Upper lobe of right lung (tissue), 1 donor: ENCODE measurements at regions of chr17 and their contacts with region 1.

Region 1: DNA sequence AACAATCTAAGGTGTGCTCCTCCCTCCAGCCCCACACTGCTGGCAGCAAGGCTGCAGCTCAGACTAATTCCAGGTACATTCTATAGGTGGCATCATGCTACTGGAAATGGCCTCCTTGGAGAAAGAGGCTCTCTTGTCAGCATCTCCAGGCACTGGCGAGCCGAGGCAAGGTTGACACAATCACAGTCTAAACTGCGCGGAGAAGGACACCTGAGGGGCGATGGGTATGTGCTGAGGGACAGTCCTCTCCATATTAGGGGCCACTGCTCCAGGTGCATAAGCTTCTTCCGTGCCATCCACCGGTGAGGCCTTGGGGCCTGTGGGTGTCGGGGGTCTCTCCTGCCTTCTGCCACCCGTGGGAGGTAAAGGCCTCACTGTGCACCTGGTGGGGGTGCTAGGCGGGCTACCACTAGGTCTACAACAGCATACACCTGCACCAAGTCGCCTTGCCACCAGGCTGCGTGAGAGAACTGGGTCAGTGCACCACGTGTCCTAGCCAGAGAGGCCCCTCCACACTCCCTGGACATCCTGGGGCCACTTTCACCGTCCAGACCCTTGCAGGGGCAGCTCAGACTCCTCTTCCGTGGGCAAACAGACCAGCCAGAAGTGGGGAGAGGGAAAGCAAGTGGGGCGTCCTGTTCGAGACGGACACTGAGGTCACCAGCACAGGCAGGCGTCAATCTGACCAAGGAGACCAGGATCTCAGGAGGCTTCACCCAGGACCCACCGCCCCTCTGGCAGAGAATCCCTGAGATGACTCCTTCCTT is 12.1 kb upstream of the CBX8 start:
- DNase-seq: no peak
- ATAC-seq: peak; percentile 75
- H3K4me3 ChIP-seq: no peak overlapping the region
- H3K27ac ChIP-seq: no peak overlapping the region
- H3K4me1 ChIP-seq: peaks cover 31% of the 10 kb centered on the region
- H3K27me3 ChIP-seq: peaks cover 86% of the 10 kb centered on the region
- CTCF ChIP-seq: peak; percentile 32

Region 2: GRCh38 chr17:79760197-79760906 is 48.6 kb before region 1 on chr17:
- intact Hi-C with region 1: no loop called
- DNase-seq: peak; percentile 40
- ATAC-seq: no peak
- H3K4me3 ChIP-seq: no peak overlapping the region
- H3K27ac ChIP-seq: no peak overlapping the region
- H3K4me1 ChIP-seq: no peaks in the 10 kb centered on the region
- H3K27me3 ChIP-seq: no peaks in the 10 kb centered on the region
- CTCF ChIP-seq: no peak

Region 3: DNA sequence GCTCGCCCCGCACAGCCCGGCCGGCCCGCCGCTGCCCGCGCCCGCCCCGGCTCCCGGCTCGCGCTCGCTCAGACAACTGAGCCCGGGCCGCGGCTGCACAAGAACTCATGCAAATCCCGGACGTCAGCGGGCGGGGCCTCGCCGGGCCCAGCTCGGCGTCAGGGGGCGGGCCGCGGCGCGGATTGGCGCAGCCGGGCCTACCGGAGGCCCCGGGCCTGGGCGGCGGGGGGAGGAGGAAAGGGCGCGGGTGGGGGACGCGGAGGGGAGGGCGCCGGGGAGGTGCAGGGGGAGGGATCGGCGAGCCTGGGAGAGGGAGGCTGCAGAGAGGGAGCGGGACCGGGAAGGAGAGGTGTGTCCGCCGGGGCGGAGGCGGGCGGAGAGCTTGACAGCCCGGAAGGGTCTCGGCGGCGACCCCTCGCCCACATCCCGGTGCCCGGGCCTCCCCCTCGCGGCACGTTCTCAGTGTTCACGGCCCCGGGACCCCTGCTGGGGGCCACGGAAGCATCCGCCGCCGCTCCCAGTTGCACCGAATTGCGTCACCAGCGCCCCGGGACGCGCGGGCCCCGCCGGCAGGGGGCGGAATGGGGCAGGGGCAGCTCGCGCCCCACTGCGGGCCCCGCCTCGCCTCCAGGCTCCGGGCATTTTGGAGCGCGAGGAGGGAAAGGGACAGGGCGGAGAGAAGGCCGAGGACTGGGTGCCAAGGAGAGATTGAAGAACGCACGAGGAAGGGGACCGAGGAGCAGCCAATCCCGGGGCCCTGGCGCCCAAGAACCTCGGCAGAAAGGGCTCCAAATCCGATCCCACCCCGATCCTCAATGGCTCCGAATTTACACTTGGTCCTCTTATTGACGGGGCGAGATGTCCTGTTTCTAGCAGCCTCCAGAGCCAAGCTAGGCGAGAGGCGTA is 30.7 kb after region 1 on chr17 and contains the start of gene CBX4:
- intact Hi-C with region 1: loop called (anchors 5 kb)
- DNase-seq: peak; percentile 98
- ATAC-seq: peak; percentile 84
- H3K4me3 ChIP-seq: peak within 1 kb of the TSS; percentile 73
- H3K27ac ChIP-seq: peak within 1 kb of the TSS; percentile 91
- H3K4me1 ChIP-seq: peaks cover 53% of the 10 kb centered on the region
- H3K27me3 ChIP-seq: peaks cover 38% of the 10 kb centered on the region
- CTCF ChIP-seq: peak; percentile 76
- total RNA-seq, gene CBX4: 20.2 TPM